Activated CD8-positive, alpha-beta T cell treated with anti-CD3 and anti-CD28 coated beads, Interleukin-2, amount 10 ng/mL, durations not matched to agents 7 days and 5 days (primary cell): ENCODE measurements at regions of chr2 and their contacts with region 1.

Region 1: GRCh38 chr2:191051825-191052778 is 38.1 kb upstream of the STAT1 start:
- DNase-seq: peak; percentile 43
- ATAC-seq: peak; percentile 46
- H3K4me3 Mint-ChIP-seq: no peak overlapping the region
- H3K27ac Mint-ChIP-seq: no peak overlapping the region
- H3K4me1 Mint-ChIP-seq: peaks cover 23% of the 10 kb centered on the region
- H3K27me3 Mint-ChIP-seq: no peaks in the 10 kb centered on the region

Region 2: DNA sequence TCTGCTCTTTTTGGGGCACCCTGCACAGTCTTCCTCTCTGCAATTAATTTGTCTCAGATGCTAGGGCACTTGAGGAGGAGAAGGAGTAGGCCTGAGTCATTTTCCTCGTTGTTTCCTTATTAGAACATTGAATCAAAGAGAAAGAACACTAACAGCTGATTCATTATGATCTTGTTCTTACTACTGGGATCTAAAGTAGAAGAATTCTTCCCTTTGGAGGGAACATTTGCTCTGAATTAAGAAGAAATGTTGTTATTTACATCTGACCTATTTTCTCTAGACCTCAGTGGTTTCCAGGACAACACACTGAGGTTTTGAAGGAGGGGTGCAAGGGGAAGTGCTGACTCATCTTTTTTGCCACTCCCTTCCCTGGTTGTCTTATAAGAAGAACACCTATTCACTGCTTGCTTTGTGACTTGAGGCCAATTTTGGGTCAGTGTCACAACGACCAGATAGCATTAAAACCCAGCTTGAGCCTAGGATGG is 13.8 kb before region 1 on chr2:
- CTCF ChIA-PET with region 1: interaction called, 91 read pairs
- POLR2A ChIA-PET with region 1: interaction called, 4 read pairs
- DNase-seq: peak; percentile 58
- ATAC-seq: peak; percentile 79
- H3K4me3 Mint-ChIP-seq: no peak overlapping the region
- H3K27ac Mint-ChIP-seq: peak overlapping the region; percentile 75
- H3K4me1 Mint-ChIP-seq: peaks cover 34% of the 10 kb centered on the region
- H3K27me3 Mint-ChIP-seq: no peaks in the 10 kb centered on the region

Region 3: GRCh38 chr2:191114403-191114886 is 62.3 kb after region 1 on chr2:
- CTCF ChIA-PET with region 1: interaction called, 27 read pairs
- POLR2A ChIA-PET with region 1: no interaction called
- DNase-seq: peak; percentile 48
- ATAC-seq: peak; percentile 46
- H3K4me3 Mint-ChIP-seq: peak overlapping the region; percentile 53
- H3K27ac Mint-ChIP-seq: peak overlapping the region; percentile 92
- H3K4me1 Mint-ChIP-seq: peaks cover 76% of the 10 kb centered on the region
- H3K27me3 Mint-ChIP-seq: no peaks in the 10 kb centered on the region

Region 4: DNA sequence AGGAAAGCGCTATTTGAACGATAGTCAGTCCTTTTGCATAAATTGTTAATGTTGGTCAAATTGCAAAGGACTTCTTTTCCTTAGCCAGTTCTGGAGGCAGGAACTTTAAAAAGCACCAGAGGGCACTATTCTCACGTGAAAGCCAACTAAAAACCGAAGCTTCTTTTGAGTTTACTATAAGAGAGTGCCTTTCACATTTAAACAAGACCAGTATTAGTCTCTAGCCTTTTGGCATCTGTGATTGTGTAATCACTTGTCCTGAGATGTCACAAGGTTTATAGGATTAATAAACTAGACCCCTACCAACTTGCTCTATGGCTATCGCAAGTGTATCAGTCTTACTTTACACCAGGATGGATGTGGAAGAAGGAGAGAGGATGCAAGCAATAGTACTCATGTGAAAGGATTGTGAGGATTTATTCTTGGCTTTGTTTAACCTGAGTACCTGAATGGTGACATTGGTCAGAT is 113.1 kb after region 1 on chr2:
- CTCF ChIA-PET with region 1: interaction called, 1,116 read pairs
- POLR2A ChIA-PET with region 1: no interaction called
- DNase-seq: peak; percentile 47
- ATAC-seq: peak; percentile 87
- H3K4me3 Mint-ChIP-seq: no peak overlapping the region
- H3K27ac Mint-ChIP-seq: no peak overlapping the region
- H3K4me1 Mint-ChIP-seq: peaks cover 22% of the 10 kb centered on the region
- H3K27me3 Mint-ChIP-seq: peaks cover 12% of the 10 kb centered on the region

Region 5: DNA sequence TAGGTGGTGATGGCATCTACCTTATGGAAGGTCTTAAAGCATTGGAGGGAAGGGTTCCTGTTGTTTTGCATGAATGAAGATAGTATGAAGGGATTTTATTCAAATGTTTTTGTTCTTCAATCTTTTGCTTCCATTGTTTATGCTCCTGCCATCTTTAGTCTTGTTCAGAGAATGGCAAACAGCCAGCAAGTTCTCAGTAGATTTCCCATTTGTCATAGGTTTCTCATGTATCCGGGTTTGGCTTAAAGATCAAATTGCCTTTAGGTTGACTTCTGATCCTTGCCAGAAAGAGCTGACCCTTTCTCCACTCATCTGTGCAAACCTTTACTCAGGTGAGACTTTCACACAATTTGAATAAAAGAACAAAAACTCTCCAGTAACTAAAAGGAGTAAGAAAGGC is 142.9 kb after region 1 on chr2:
- CTCF ChIA-PET with region 1: interaction called, 13 read pairs
- POLR2A ChIA-PET with region 1: no interaction called
- DNase-seq: no peak
- ATAC-seq: no peak
- H3K4me3 Mint-ChIP-seq: no peak overlapping the region
- H3K27ac Mint-ChIP-seq: peak overlapping the region; percentile 97
- H3K4me1 Mint-ChIP-seq: peaks cover 45% of the 10 kb centered on the region
- H3K27me3 Mint-ChIP-seq: no peaks in the 10 kb centered on the region

Region 6: DNA sequence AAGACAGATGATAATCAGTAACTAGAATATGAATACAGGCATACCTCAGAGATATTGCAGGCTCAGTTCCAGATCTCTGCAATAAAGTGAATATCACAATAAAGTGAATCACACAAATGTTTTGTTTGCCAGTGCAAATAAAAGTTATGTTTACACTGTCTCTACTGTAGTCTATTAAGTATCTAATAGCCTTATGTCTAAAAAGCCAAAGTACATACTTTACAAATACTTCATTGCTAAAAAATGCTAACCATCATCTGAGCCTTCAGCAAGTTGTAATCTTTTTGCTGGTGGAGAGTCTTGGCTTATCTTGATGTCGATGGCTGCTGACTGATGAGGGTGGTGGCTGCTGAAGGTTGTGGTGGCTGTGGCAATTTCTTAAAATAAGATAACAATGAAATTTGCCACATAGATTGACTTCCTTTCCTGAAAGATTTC is 352.5 kb after region 1 on chr2:
- CTCF ChIA-PET with region 1: no interaction called
- POLR2A ChIA-PET with region 1: no interaction called
- DNase-seq: no peak
- ATAC-seq: no peak
- H3K4me3 Mint-ChIP-seq: no peak overlapping the region
- H3K27ac Mint-ChIP-seq: no peak overlapping the region
- H3K4me1 Mint-ChIP-seq: peaks cover 17% of the 10 kb centered on the region
- H3K27me3 Mint-ChIP-seq: no peaks in the 10 kb centered on the region